PC-3 (cell line): ENCODE measurements at regions of chr17 and their contacts with region 1.

Region 1: GRCh38 chr17:71110326-71110725 is 941.0 kb downstream of the KCNJ2 start:
- DNase-seq: peak; percentile 49
- ATAC-seq: peak; percentile 55
- H3K4me3 ChIP-seq: no peak overlapping the region
- H3K27ac ChIP-seq: no peak overlapping the region
- H3K4me1 ChIP-seq: peaks cover 19% of the 10 kb centered on the region
- H3K27me3 ChIP-seq: no peaks in the 10 kb centered on the region
- CTCF ChIP-seq: no peak

Region 2: GRCh38 chr17:71176331-71176730 is 66.0 kb after region 1 on chr17:
- CTCF ChIA-PET with region 1: no interaction called
- POLR2A ChIA-PET with region 1: no interaction called
- intact Hi-C with region 1: loop called (anchors 5 kb)
- DNase-seq: no peak
- ATAC-seq: no peak
- H3K4me3 ChIP-seq: no peak overlapping the region
- H3K27ac ChIP-seq: no peak overlapping the region
- H3K4me1 ChIP-seq: peaks cover 21% of the 10 kb centered on the region
- H3K27me3 ChIP-seq: no peaks in the 10 kb centered on the region
- CTCF ChIP-seq: no peak